T-cell (primary cell): ENCODE measurements at regions of chr12 and their contacts with region 1.

Region 1: GRCh38 chr12:120249875-120250795 is 15.4 kb downstream of the PXN start:
- DNase-seq: peak in 17 of 35 experiments; percentile 25 to 66 (median 40)
- ATAC-seq: peak in 1 of 4 experiments; percentile 13
- H3K4me3 ChIP-seq: peak overlapping the region; percentile 26 to 30
- H3K4me3 Mint-ChIP-seq: peak overlapping the region; percentile 62 to 64 (median 63)
- H3K27ac ChIP-seq: peak overlapping the region; percentile 75
- H3K27ac Mint-ChIP-seq: peak overlapping the region; percentile 88
- H3K4me1 ChIP-seq: peaks cover 53 to 85% of the 10 kb centered on the region in 2 experiments
- H3K4me1 Mint-ChIP-seq: peaks cover 83 to 86% (median 83%) of the 10 kb centered on the region in 3 donors
- H3K27me3 ChIP-seq: no peaks in the 10 kb centered on the region
- H3K27me3 Mint-ChIP-seq: no peaks in the 10 kb centered on the region

Region 2: DNA sequence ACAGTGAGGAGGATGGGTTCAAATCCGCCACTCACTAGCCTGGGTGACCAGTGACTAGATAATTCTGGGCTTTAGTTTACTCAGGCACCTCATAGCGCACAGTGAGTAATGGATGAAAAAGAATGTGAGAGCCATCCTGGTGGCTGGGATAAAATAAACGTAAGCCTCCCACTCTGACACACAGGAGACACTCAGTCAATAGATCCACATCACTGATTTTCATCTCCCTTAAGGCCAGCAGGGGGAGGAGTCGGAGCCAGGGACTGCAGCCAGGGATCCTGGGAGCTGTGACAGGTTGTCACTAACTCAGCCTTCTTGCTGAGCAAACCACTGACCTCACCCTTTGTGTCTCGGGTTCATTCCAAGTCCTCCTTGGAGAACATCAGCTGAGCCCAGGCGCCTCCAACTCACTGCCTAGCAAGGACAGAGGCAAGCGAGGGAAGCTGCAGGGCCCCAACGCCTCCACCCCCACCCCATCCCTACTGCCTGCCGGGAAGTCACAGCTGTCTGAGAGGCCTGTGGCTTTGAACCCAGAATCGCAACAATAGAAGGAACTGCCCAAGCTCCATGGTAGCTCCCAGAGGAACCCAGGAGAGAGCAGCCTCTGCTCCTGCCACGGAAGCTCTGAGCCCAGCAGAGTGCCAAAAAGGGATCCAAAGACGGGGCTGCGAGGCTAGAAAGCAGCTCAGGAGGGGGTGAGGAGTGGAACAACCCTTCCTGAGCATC is 15.3 kb before region 1 on chr12:
- CTCF ChIA-PET with region 1: interaction called, 4 to 33 read pairs
- POLR2A ChIA-PET with region 1: interaction called, 7 to 8 read pairs
- DNase-seq: peak in 1 of 35 experiments; percentile 27
- ATAC-seq: no peak
- H3K4me3 ChIP-seq: no peak overlapping the region
- H3K4me3 Mint-ChIP-seq: no peak overlapping the region
- H3K27ac ChIP-seq: peak overlapping the region; percentile 24
- H3K27ac Mint-ChIP-seq: peak overlapping the region; percentile 90 to 97
- H3K4me1 ChIP-seq: peaks cover 28 to 99% of the 10 kb centered on the region in 2 experiments
- H3K4me1 Mint-ChIP-seq: peaks cover 81 to 93% (median 90%) of the 10 kb centered on the region in 3 donors
- H3K27me3 ChIP-seq: no peaks in the 10 kb centered on the region
- H3K27me3 Mint-ChIP-seq: no peaks in the 10 kb centered on the region